ENCODE measurements at regions of chr1 and their contacts with region 1.

Region 1: GRCh38 chr1:45499415-45499769 is 481 bp downstream of the CCDC163 start:
- DNase-seq: peak in 1 of 14 experiments; percentile 23
- ATAC-seq: no peak
- H3K4me3 ChIP-seq: peak overlapping the region; percentile 80
- H3K4me3 Mint-ChIP-seq: peak overlapping the region; percentile 96
- H3K27ac ChIP-seq: peak overlapping the region; percentile 0 to 53
- H3K27ac Mint-ChIP-seq: peak overlapping the region; percentile 83
- H3K4me1 ChIP-seq: peaks cover 24% of the 10 kb centered on the region
- H3K4me1 Mint-ChIP-seq: peaks cover 36% of the 10 kb centered on the region
- H3K27me3 ChIP-seq: no peaks in the 10 kb centered on the region
- H3K27me3 Mint-ChIP-seq: no peaks in the 10 kb centered on the region
- CTCF ChIP-seq: no peak

Region 2: GRCh38 chr1:43952731-43953346 is 1546.6 kb before region 1 on chr1:
- CTCF ChIA-PET with region 1: no interaction called
- POLR2A ChIA-PET with region 1: no interaction called
- intact Hi-C with region 1: no loop called
- DNase-seq: no peak
- ATAC-seq: no peak
- H3K4me3 ChIP-seq: no peak overlapping the region
- H3K4me3 Mint-ChIP-seq: no peak overlapping the region
- H3K27ac ChIP-seq: no peak overlapping the region
- H3K27ac Mint-ChIP-seq: no peak overlapping the region
- H3K4me1 ChIP-seq: peaks cover 10% of the 10 kb centered on the region
- H3K4me1 Mint-ChIP-seq: peaks cover 34% of the 10 kb centered on the region
- H3K27me3 ChIP-seq: no peaks in the 10 kb centered on the region
- H3K27me3 Mint-ChIP-seq: no peaks in the 10 kb centered on the region
- CTCF ChIP-seq: no peak

Region 3: DNA sequence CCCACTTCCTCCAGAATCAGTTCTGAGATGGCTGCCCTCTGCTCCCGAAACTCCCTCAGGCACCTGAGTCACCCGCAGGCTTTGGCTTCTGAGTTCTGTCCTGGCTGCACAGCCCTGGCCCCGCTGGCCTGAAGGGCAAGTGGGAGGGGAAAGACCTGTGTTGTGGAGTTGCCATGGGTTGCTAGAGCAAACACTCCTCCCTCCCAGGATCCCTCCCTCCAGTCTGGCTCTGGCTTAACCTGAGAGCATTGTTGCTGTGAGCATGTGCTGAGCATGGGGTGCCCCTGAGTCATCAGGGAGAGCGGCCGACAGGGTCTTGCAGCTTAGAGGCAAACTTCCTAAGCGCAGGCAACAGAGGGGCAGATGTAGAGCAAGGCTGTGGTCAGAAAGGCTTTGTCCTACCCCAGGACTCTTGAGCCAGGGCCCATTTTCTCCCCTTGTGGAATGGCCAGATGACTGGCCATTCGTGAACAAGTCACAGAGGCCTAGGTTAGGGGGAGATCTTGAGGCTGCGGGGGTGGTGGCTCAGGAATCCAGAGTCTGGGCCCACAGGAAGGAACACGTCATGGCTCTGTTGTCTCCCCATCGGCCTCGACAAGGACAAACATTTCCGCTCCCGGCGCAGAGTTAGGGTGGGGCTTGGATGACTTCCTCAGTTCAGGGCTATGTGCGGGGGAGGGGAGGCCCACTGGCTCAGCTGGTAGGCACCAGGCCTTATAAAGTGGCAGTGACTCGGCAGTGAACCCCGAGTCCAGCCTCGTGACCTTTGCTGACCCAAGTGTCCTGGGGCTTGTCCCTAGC is 691.9 kb before region 1 on chr1 and contains the start of gene DYNLT4:
- CTCF ChIA-PET with region 1: no interaction called
- POLR2A ChIA-PET with region 1: interaction called, 14 read pairs
- intact Hi-C with region 1: no loop called
- DNase-seq: peak; percentile 82 to 98 (median 94)
- ATAC-seq: peak; percentile 56
- H3K4me3 ChIP-seq: peak within 1 kb of the TSS; percentile 12
- H3K4me3 Mint-ChIP-seq: peak within 1 kb of the TSS; percentile 83
- H3K27ac ChIP-seq: peak within 1 kb of the TSS; percentile 99 to 100
- H3K27ac Mint-ChIP-seq: peak within 1 kb of the TSS; percentile 99
- H3K4me1 ChIP-seq: peaks cover 100% of the 10 kb centered on the region
- H3K4me1 Mint-ChIP-seq: peaks cover 79% of the 10 kb centered on the region
- H3K27me3 ChIP-seq: no peaks in the 10 kb centered on the region
- H3K27me3 Mint-ChIP-seq: peaks cover 4% of the 10 kb centered on the region
- CTCF ChIP-seq: no peak
- total RNA-seq, gene DYNLT4: 1.8 to 2.1 TPM

Region 4: DNA sequence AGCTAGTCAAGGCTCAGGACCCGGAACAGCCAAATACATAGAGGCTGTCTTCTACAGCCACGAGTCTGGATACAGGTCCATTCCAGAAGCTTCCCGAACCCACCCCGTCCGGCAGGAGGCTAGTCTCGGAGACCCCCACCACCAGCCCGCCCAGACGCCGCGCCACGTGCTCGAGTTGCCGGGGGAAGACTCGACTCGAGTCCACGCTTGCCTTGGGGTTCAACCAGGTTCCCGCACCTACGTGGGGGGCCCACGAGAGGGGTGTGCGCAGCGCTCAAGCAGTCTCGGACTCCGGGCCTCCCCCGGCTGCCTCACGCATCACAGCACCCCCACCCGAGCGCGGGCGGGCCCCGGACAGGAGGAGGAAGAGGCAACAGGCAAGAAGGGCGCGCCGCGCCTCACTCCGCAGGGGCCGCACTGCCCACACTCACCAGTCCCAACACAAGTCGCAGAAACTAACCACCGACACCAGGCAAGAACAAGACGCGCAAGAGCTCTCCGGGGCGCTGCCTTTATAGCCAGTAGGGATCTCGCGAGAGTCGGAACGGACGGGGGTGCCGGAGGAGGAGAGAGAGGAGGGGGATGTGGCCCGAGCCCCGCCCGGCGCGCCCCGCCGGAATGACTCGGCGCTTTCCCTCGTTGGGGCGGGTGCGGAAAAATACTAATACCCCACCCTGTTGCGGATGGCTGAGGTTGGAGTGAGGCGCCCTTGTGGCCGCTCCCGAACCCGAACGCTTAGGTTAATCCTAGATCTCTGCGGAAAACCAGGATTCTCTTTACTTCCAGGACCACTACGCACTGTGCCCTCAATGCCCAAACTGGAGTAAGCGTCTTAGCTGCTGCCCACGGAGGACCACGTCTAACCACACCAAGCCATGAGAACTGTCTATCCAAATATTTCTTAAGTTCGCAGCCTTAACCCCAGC is 22.3 kb after region 1 on chr1 and contains the start of gene PRDX1:
- CTCF ChIA-PET with region 1: no interaction called
- POLR2A ChIA-PET with region 1: interaction called, 59 read pairs
- intact Hi-C with region 1: loop called in 1 of 2 experiments (anchors 1 kb)
- DNase-seq: peak; percentile 93 to 97 (median 96)
- ATAC-seq: peak; percentile 90
- H3K4me3 ChIP-seq: peak within 1 kb of the TSS; percentile 90
- H3K4me3 Mint-ChIP-seq: peak within 1 kb of the TSS; percentile 97
- H3K27ac ChIP-seq: peak within 1 kb of the TSS; percentile 61 to 65
- H3K27ac Mint-ChIP-seq: peak within 1 kb of the TSS; percentile 86
- H3K4me1 ChIP-seq: peaks cover 36% of the 10 kb centered on the region
- H3K4me1 Mint-ChIP-seq: peaks cover 30% of the 10 kb centered on the region
- H3K27me3 ChIP-seq: no peaks in the 10 kb centered on the region
- H3K27me3 Mint-ChIP-seq: no peaks in the 10 kb centered on the region
- CTCF ChIP-seq: no peak
- total RNA-seq, gene PRDX1: 18.1 to 24.1 TPM

Region 5: GRCh38 chr1:45569962-45570581 is 70.7 kb after region 1 on chr1:
- CTCF ChIA-PET with region 1: no interaction called
- POLR2A ChIA-PET with region 1: interaction called, 3 read pairs
- intact Hi-C with region 1: loop called in 1 of 2 experiments (anchors 1 kb)
- DNase-seq: peak; percentile 55 to 87 (median 60)
- ATAC-seq: peak; percentile 99
- H3K4me3 ChIP-seq: no peak overlapping the region
- H3K4me3 Mint-ChIP-seq: no peak overlapping the region
- H3K27ac ChIP-seq: no peak overlapping the region
- H3K27ac Mint-ChIP-seq: no peak overlapping the region
- H3K4me1 ChIP-seq: peaks cover 2% of the 10 kb centered on the region
- H3K4me1 Mint-ChIP-seq: peaks cover 5% of the 10 kb centered on the region
- H3K27me3 ChIP-seq: no peaks in the 10 kb centered on the region
- H3K27me3 Mint-ChIP-seq: no peaks in the 10 kb centered on the region
- CTCF ChIP-seq: peak; percentile 95

Measured in CD4-positive, alpha-beta T cell (primary cell).